Tibial artery (tissue), 4 donors: ENCODE measurements at regions of chr5 and their contacts with region 1.

Region 1: GRCh38 chr5:39194466-39195136 is 24.8 kb downstream of the FYB1 start:
- DNase-seq: no peak
- H3K4me3 ChIP-seq: no peak overlapping the region
- H3K27ac ChIP-seq: no peak overlapping the region
- H3K4me1 ChIP-seq: no peaks in the 10 kb centered on the region
- H3K27me3 ChIP-seq: peaks cover 0 to 3% of the 10 kb centered on the region in 2 donors
- CTCF ChIP-seq: no peak

Region 2: GRCh38 chr5:39249564-39250274 is 55.1 kb after region 1 on chr5:
- intact Hi-C with region 1: loop called (anchors 10 kb)
- DNase-seq: no peak
- H3K4me3 ChIP-seq: no peak overlapping the region
- H3K27ac ChIP-seq: no peak overlapping the region
- H3K4me1 ChIP-seq: no peaks in the 10 kb centered on the region
- H3K27me3 ChIP-seq: no peaks in the 10 kb centered on the region
- CTCF ChIP-seq: no peak